ENCODE measurements at regions of chr20 and their contacts with region 1.

Region 1: GRCh38 chr20:24934101-24934661 is 14.9 kb upstream of the CST7 start:
- DNase-seq: peak; percentile 21
- ATAC-seq: no peak
- H3K4me3 Mint-ChIP-seq: no peak overlapping the region
- H3K27ac Mint-ChIP-seq: no peak overlapping the region
- H3K4me1 Mint-ChIP-seq: peaks cover 27% of the 10 kb centered on the region
- H3K27me3 Mint-ChIP-seq: no peaks in the 10 kb centered on the region

Region 2: DNA sequence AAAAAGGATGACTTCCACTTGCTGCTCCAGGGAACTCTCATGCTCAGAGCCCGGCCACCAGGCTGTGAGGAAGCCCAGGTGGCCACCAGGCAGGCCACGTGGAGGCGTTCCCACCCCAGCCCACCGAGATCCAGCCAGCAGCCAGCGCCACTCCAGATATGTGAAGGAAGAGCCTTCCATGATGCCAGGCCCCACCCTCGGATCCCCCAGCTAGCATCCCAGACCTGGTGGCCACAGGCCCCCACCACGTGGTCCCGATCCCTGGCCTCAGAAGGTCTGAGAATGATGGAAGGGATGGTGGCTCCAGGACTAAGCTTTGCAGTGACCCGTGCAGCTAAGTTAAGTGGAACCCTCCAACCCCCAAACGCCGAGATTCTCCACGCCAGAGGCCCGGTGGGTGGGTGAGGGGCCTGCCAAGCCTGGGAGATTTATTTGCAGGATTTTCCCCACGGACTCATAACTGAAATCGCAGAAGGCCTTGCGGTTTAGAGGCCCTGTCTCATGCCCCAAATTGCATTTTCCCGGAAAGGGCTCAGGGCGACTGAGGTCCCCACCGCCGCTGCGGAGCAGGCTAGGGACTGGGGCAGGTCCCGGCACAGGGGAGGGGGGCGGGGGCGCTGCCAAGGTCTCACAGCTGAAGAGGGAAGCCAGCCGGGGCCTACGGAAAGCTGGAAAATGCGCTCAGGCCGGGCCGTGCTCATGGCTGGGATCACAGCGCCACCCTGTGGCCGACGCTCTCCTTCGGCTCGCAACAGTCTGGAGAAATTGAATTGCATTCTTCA is 16.2 kb before region 1 on chr20:
- CTCF ChIA-PET with region 1: interaction called, 12 read pairs
- DNase-seq: peak; percentile 64
- ATAC-seq: peak; percentile 81
- H3K4me3 Mint-ChIP-seq: no peak overlapping the region
- H3K27ac Mint-ChIP-seq: no peak overlapping the region
- H3K4me1 Mint-ChIP-seq: peaks cover 12% of the 10 kb centered on the region
- H3K27me3 Mint-ChIP-seq: peaks cover 6% of the 10 kb centered on the region

Region 3: DNA sequence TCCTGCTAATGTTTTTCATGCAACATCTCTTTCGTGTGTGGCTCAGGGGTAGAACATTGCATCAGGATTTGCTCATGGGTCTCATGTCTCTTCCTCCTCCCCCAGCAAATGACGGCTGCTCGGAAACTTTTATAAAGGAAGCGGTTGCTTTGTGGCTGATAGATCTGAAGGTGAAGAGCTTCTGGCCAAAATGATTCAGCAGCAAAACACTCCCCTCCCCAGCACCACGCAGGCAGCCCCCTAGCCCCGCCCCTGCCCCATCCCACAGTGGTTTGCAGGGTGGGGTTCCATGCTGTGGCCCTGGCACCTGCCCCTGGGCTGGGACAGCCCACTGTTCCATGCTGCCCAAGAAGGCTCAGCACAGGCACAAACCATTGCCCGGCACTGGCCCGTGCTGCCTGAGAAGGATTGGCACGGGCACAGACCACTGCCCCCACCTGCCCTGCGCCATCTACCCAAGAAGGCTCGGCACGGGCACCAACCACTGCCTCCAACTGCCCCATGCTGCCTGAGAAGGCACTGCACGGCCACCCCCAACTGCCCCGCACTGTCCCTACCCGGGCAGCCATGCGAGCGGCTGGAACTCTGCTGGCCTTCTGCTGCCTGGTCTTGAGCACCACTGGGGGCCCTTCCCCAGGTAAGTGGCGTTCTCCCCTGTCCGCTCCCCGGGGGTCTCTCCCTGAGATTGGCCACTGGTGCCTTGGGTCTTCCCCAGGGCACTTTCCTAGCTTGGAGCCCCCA is 14.9 kb after region 1 on chr20 and contains the start of gene CST7:
- CTCF ChIA-PET with region 1: interaction called, 39 read pairs
- DNase-seq: peak; percentile 97
- ATAC-seq: peak; percentile 91
- H3K4me3 Mint-ChIP-seq: peak within 1 kb of the TSS; percentile 96
- H3K27ac Mint-ChIP-seq: peak within 1 kb of the TSS; percentile 100
- H3K4me1 Mint-ChIP-seq: peaks cover 62% of the 10 kb centered on the region
- H3K27me3 Mint-ChIP-seq: no peaks in the 10 kb centered on the region
- total RNA-seq, gene CST7: 177 to 202 TPM

Region 4: DNA sequence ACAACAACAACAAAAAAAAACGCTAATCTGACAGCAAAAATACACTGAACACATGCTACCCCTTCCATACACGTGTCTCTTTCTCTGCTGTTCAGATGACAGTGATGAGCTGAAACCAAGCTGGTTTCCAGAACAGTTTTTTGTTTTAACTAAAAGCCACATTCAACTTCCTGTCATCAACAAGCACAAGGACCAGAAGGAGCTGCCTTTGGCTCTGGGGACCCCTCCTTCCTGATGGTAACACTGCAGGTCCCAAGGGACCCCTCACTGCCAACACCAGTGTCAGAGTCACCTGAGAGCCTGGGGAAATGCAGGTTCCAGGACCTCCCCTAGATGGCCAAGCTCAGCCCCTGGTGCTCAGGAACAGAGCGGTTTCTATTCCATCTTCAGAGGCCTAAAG is 20.9 kb after region 1 on chr20:
- CTCF ChIA-PET with region 1: interaction called, 39 read pairs
- DNase-seq: peak; percentile 62
- ATAC-seq: peak; percentile 54
- H3K4me3 Mint-ChIP-seq: peak overlapping the region; percentile 42
- H3K27ac Mint-ChIP-seq: peak overlapping the region; percentile 86
- H3K4me1 Mint-ChIP-seq: peaks cover 61% of the 10 kb centered on the region
- H3K27me3 Mint-ChIP-seq: no peaks in the 10 kb centered on the region

Region 5: GRCh38 chr20:25065625-25066338 is 131.6 kb after region 1 on chr20:
- CTCF ChIA-PET with region 1: interaction called, 21 read pairs
- DNase-seq: peak; percentile 76
- ATAC-seq: peak; percentile 82
- H3K4me3 Mint-ChIP-seq: no peak overlapping the region
- H3K27ac Mint-ChIP-seq: no peak overlapping the region
- H3K4me1 Mint-ChIP-seq: peaks cover 5% of the 10 kb centered on the region
- H3K27me3 Mint-ChIP-seq: peaks cover 20% of the 10 kb centered on the region

Measured in activated CD8-positive, alpha-beta memory T cell treated with anti-CD3 and anti-CD28 coated beads, Interleukin-2, amount 10 ng/mL, durations not matched to agents 7 days and 5 days (primary cell).